SK-N-SH (cell line): ENCODE measurements at regions of chr1 and their contacts with region 1.

Region 1: DNA sequence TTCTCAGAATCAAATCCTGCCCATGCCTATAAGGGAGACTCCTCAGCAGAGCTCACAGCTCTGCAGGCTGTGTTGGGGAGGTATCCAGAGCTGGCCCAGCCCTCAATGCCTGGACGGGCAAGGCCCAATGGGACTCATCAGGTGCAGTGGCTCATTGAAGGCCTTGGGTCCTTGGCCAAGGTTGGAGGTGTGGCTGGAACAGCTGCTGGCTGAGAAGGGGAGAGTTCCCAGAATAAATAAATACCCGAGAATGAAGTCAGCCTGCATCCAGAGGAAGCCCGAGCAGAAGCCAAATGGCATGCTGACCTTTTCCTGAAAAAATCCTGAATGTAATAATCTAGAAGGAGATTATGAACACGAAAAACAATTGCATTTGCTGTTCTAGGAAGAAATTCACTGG is 25.2 kb upstream of the IKBKE start:
- DNase-seq: no peak
- H3K4me3 ChIP-seq: no peak overlapping the region
- H3K27ac ChIP-seq: no peak overlapping the region
- H3K4me1 ChIP-seq: peaks cover 9 to 26% of the 10 kb centered on the region in 2 experiments; a peak in 1 of 4 replicates
- H3K27me3 ChIP-seq: no peaks in the 10 kb centered on the region
- CTCF ChIP-seq: no peak
- EP300 ChIP-seq: no peak
- RAD21 ChIP-seq: no peak

Region 2: DNA sequence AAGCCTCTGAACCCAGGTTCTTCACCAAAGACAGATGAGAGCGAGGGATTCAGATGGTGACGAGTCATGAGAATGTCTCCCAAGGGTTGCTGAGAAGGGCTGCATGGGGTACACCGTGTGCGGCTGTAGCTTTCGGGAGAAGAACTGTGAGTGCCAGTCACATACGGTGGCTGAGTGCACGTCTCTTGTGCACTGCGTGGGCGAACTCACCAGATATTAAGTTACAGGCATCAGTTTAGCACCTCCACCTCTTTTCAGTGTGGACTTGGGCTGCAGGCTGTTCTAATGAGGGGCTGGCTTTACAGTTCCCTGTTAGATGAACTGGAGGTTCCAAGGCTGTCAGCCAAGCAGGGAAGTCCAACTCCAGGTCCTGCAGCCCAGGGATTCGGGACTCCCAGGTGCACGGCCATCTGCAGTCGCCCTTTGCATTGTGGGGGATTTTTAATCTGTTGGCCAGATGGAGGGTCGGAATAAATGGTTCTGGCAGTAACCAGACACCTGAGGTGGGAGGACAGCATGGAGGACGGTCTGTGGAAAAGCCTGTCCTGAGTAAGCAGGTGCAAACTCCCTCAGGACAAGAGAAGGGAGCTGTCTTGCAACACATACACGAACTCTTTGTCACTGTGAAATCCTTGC is 301.5 kb before region 1 on chr1:
- CTCF ChIA-PET with region 1: no interaction called
- POLR2A ChIA-PET with region 1: no interaction called
- DNase-seq: no peak
- H3K4me3 ChIP-seq: no peak overlapping the region
- H3K27ac ChIP-seq: no peak overlapping the region
- H3K4me1 ChIP-seq: no peaks in the 10 kb centered on the region
- H3K27me3 ChIP-seq: peaks cover 44% of the 10 kb centered on the region
- CTCF ChIP-seq: no peak
- EP300 ChIP-seq: no peak
- RAD21 ChIP-seq: no peak

Region 3: DNA sequence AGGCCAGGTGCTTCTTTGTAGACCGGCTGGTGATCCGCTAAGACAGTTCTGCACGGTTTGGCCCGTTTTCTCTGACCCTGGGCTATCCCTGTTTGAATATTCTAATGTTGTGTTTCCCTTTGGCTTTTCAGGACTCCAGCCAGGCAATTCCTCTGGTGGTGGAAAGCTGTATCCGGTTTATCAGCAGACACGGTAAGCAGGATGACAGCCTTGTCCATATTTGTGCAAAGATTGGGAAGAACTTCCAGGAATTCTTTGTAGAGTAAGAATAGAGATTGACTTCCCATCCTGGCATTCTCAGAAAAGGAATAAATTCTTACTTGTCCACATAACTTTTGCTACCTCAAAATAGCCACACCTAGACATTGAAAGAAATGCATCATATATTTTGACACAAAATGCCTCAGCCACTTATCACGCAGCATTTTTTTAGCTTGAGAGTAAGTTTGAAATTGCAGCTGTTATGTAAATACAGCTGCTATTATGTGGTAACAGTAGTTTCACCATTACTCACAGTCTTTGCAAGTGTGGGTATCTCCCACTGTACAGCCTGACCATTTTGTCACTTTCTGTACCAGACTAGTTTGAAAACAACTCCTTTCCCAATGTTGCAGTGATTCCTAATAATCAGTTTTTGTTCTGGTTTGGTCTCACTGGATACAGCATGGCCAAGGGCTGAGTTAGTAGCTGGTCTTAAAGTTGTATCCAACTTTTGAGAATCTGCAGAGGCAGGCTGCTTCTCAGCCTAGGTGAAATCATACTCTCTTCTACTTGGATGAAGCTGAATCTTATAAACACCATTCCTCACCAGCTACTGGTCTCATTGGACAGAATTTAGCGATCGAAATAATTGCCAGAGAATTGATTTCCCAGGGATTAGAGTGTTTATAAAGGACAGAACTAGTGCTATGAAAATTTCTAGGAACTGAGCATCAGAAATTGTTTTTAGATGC is 14.8 kb before region 1 on chr1:
- CTCF ChIA-PET with region 1: no interaction called
- POLR2A ChIA-PET with region 1: no interaction called
- DNase-seq: no peak
- H3K4me3 ChIP-seq: no peak overlapping the region
- H3K27ac ChIP-seq: no peak overlapping the region
- H3K4me1 ChIP-seq: no peaks in the 10 kb centered on the region
- H3K27me3 ChIP-seq: no peaks in the 10 kb centered on the region
- CTCF ChIP-seq: no peak
- EP300 ChIP-seq: no peak
- RAD21 ChIP-seq: no peak

Region 4: DNA sequence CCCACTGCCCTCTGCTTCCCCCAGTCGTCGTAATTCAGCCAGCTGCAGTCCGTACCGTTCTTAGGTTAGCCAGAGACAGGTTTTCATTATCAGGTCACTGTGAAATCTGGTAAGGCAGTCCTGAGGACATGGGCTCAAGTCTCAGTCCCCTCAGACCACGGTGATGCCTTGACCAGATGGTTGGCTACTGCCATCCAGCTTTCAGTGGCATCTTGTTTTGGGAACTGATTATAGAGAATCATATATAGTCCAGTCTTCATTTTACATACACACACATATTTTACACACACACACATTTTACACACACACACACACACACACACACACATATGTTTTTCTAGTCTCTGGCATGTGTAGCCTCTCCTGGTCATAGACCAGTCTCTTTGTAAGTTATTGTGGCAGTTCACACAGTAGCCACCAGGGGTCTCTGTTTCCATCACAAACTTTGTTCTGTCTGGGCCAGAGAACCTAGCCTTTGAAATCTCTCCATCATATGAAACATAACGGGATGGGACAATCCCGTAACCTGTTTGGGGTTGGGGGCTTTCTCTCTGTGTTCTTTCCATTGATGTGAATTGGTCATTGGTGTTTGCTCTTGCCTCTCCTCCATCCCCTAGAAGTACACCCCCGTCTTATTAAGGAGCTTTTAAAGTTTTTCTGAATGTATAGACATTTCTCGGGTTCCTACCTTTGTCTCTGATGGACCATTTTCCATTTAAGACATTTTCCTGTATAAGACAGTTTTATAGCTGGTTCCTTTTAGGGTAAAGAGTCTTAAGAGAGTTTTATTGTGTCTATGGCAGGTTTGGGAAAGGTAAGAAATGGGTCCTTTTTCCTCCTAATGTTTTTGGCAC is 16.7 kb after region 1 on chr1:
- CTCF ChIA-PET with region 1: interaction called, 34 read pairs
- POLR2A ChIA-PET with region 1: no interaction called
- DNase-seq: peak; percentile 76
- H3K4me3 ChIP-seq: no peak overlapping the region; a peak in 1 of 4 replicates
- H3K27ac ChIP-seq: no peak overlapping the region
- H3K4me1 ChIP-seq: peaks cover 13 to 19% of the 10 kb centered on the region in 2 experiments
- H3K27me3 ChIP-seq: no peaks in the 10 kb centered on the region
- CTCF ChIP-seq: peak; percentile 89
- EP300 ChIP-seq: no peak
- RAD21 ChIP-seq: peak; percentile 72